ENCODE measurements at regions of chr12 and their contacts with region 1.

Region 1: GRCh38 chr12:12786716-12787601 is 1.5 kb downstream of the APOLD1 start:
- DNase-seq: peak; percentile 89 to 94
- ATAC-seq: peak; percentile 94
- H3K4me3 ChIP-seq: peak overlapping the region; percentile 42 to 48
- H3K27ac ChIP-seq: peak overlapping the region in 1 of 2 donors; percentile 66
- H3K4me1 ChIP-seq: peaks cover under 1 to 3% of the 10 kb centered on the region in 2 donors
- H3K27me3 ChIP-seq: no peaks in the 10 kb centered on the region

Region 2: DNA sequence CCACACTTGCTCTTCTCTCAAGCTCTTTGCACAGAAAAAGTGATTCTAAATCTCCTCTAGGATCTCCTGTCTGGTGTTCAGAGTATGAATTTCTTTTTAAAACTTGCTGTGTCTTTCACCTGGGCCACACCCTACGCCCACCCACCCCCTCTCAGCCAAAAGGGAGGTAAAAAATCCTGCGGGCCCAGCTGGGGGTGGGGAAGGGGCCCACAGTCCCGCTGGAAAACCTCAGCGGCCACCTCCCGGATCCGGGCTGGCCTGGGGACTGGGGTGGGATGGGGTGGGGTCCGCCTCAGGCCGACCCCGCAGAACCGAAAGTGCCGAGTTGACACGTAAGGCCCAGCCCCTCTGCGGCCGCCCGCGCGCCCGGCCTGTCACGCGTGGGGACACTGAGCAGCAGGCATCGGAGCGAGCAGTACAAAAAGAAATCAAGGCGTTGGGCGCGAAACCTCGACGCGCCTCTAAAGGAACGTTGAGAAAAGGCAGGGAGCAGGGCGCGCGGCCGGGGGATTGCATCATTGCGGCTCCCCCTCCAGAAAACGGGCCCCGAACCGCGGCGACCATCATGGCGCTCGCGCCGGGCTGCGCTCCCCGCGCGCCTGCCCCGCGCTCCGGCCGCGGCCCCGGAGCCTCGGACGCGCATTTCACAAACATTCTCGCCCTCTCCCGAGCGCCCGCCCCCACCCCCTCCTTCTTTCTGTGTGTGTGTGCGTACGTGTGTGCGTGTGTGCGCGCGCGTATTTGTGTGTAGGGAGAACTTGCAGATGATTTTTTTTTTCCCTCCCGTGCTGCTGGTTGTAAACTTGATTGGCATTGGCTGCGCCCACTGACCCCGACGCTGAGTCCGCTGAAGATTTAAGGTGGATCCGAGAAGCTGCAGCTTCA is 62.1 kb before region 1 on chr12:
- intact Hi-C with region 1: loop called in 1 of 2 experiments (anchors 10 kb)
- DNase-seq: peak; percentile 95 to 96
- ATAC-seq: peak; percentile 91
- H3K4me3 ChIP-seq: peak overlapping the region; percentile 47 to 96
- H3K27ac ChIP-seq: peak overlapping the region; percentile 62 to 73
- H3K4me1 ChIP-seq: no peaks in the 10 kb centered on the region
- H3K27me3 ChIP-seq: no peaks in the 10 kb centered on the region

Region 3: GRCh38 chr12:12983420-12984035 is 196.6 kb after region 1 on chr12:
- intact Hi-C with region 1: loop called in 1 of 2 experiments (anchors 5 kb)
- DNase-seq: no peak
- ATAC-seq: peak; percentile 79
- H3K4me3 ChIP-seq: no peak overlapping the region
- H3K27ac ChIP-seq: no peak overlapping the region
- H3K4me1 ChIP-seq: peaks cover 0 to 5% of the 10 kb centered on the region in 2 donors
- H3K27me3 ChIP-seq: no peaks in the 10 kb centered on the region